ENCODE measurements at regions of chr3 and their contacts with region 1.

Region 1: GRCh38 chr3:67593761-67594244 is 60.6 kb downstream of the SUCLG2 start:
- DNase-seq: peak; percentile 47
- H3K4me3 Mint-ChIP-seq: no peak overlapping the region
- H3K27ac Mint-ChIP-seq: no peak overlapping the region
- H3K4me1 Mint-ChIP-seq: peaks cover 13% of the 10 kb centered on the region
- H3K27me3 Mint-ChIP-seq: no peaks in the 10 kb centered on the region
- CTCF ChIP-seq: peak; percentile 15

Region 2: DNA sequence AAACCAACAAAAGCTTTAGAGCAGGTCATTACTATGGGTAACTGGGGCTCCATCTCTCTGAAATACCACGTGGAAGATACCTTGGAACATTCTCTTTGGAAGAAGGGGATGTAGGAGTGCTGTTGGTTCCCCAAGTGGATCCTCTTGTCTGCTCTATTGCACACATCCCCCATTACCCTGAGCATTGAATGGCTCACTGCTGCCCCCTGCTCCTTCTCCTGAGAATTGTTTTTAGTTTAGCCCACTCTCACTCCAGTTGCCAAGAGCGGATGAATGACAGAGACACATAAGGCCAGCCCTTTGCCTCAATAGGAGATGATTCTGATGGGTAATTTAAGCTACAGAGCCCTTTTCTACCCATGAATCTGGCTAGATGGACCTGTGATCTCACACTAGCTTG is 196.2 kb after region 1 on chr3:
- CTCF ChIA-PET with region 1: interaction called, 6 read pairs
- POLR2A ChIA-PET with region 1: no interaction called
- intact Hi-C with region 1: loop called (anchors 10 kb)
- DNase-seq: peak; percentile 70
- H3K4me3 Mint-ChIP-seq: no peak overlapping the region
- H3K27ac Mint-ChIP-seq: no peak overlapping the region
- H3K4me1 Mint-ChIP-seq: no peaks in the 10 kb centered on the region
- H3K27me3 Mint-ChIP-seq: peaks cover 55% of the 10 kb centered on the region
- CTCF ChIP-seq: peak; percentile 41

Measured in MCF 10A (cell line).